G401 (cell line): ENCODE measurements at regions of chr9 and their contacts with region 1.

Region 1: DNA sequence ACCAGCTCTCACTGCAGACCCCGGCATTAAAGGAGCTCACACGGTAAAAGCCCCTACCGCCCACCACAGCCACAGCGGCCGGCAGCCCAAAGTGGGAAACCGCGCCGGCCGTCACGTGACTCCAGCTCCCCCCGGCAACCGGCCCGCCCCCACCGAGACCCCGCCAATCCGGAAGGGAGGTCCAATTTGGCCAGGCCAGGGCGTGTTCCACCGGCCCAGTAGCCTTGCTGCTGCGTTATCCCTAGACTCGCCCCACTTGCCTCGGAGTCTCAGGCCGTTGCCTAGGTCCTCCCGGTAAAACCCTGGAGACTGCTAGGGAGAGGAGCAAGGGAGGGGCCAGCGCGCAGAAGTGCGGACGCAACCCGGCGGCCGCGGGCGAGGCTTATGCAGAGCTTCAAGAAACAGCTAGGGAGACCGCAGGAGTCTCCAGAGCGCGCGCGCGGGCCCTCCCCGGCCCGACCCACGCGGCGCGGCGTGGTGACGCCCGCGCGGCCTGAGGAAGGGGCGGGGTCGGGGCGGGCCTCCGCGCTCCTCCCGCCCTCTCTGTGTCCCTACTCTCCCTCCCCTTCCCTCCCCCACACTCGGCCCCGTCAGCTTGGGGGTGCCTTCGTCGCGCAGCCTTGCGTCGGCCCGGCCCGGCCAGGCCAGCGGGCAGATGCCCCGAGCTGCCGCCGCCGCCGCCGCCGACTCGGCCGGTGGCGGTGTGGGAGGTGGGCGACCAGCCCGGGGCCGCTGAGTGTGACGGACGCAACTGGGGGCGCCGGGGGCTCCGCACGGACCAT is at the start of gene RIC1:
- DNase-seq: peak; percentile 94
- total RNA-seq, gene RIC1: 13.5 and 17.1 TPM in 2 replicates

Region 2: GRCh38 chr9:5536684-5537083 is 92.0 kb before region 1 on chr9:
- in situ Hi-C with region 1: no loop called
- DNase-seq: no peak

Region 3: DNA sequence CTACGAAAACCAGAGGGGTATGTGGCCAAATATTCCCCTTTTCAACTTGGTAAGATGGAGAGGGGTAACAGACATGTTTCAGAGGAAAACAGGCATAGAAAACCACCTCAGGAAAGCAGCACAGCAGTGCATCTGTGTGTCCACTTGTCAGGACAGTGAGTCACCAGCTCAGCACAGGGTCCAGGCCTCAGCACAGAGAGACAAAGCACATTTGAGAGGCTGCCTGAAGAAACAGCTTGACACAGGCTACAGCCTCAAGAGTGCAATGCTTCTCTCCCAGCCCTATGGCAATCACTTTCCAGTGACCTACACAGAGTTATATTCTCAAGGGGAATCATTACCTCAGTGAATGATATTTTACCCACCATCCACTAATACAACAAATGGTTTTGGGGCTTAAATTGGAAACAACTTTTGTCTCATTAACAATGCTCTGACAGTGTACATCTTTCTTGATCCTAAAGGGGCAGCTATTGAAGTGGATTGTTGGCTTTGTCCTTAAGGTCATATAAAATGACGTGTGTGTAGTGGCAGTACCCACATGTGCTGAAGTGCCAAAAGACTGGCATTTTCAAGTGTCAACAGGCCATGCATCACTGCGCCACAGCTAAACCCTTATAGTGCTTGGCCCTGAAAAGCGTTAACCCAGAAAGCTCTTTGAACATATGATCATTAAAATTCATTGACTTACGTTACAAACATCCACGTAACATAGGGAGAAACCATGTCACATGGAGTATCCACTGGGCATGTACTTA is 157.8 kb after region 1 on chr9:
- in situ Hi-C with region 1: loop called (anchors 10 kb)
- DNase-seq: no peak